Right cardiac atrium (tissue), 5 donors: ENCODE measurements at regions of chr6 and their contacts with region 1.

Region 1: GRCh38 chr6:99746261-99746895 is 139.7 kb downstream of the PRDM13 start:
- DNase-seq: peak; percentile 16 to 37 (median 34)
- ATAC-seq: peak; percentile 71 to 79
- H3K4me3 ChIP-seq: no peak overlapping the region
- H3K27ac ChIP-seq: no peak overlapping the region
- H3K4me1 ChIP-seq: no peaks in the 10 kb centered on the region
- H3K27me3 ChIP-seq: no peaks in the 10 kb centered on the region

Region 2: DNA sequence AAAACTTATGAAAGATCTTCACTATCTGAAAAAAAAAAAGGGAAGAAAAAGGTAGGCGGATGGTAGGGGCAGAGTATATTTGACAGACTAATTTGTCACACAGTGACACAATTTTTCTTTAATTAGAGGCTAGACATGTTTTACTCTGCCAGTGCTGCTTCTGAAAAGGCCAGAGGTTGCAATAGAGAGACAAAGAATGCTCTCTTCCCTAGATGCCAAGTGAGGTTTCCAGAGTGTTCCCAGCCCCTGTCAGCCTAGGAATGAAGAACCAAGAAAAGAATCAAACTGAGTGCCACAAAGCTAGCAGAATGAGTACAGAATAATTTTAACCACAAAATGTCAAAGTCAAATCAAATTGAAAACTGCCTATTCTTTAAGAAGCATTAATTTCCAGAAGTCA is 334.3 kb before region 1 on chr6:
- intact Hi-C with region 1: no loop called
- DNase-seq: no peak
- ATAC-seq: peak in 1 of 2 donors; percentile 51
- H3K4me3 ChIP-seq: no peak overlapping the region
- H3K27ac ChIP-seq: no peak overlapping the region
- H3K4me1 ChIP-seq: peaks cover 2% of the 10 kb centered on the region
- H3K27me3 ChIP-seq: no peaks in the 10 kb centered on the region

Region 3: DNA sequence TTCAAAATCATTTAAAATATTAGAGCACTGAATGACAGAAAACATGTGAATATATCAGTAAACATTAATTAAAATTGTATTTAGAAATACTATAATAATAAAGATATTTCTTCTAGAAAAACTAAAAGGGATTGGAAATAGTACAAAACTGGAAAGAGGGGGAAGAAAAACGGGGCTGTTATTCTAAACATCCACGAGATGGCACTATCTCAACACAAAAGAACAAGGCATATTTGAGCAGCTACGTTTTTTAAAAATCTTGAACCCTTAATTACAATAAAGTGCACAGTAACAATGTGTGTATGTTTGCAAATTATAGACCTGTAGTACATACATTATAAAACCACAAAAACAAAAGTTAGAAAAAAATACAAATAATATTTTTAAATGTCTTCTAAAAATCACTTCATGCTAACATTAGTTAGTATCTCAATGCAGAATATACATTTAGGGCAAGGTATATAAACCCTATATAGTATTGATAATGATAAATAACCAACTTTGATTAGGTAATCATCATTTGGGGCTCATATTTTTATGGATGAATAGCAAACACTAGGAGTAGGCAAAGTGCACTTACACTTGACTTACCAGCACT is 278.8 kb before region 1 on chr6:
- intact Hi-C with region 1: loop called (anchors 5 to 10 kb)
- DNase-seq: no peak
- ATAC-seq: no peak
- H3K4me3 ChIP-seq: no peak overlapping the region
- H3K27ac ChIP-seq: no peak overlapping the region
- H3K4me1 ChIP-seq: no peaks in the 10 kb centered on the region
- H3K27me3 ChIP-seq: no peaks in the 10 kb centered on the region

Region 4: GRCh38 chr6:99590728-99591672 is 155.4 kb before region 1 on chr6:
- intact Hi-C with region 1: loop called in 2 of 4 experiments (anchors 10 kb)
- DNase-seq: peak in 1 of 3 donors; percentile 35
- ATAC-seq: peak in 1 of 2 donors; percentile 39
- H3K4me3 ChIP-seq: peak overlapping the region; percentile 24
- H3K27ac ChIP-seq: no peak overlapping the region
- H3K4me1 ChIP-seq: peaks cover 2% of the 10 kb centered on the region
- H3K27me3 ChIP-seq: peaks cover 3% of the 10 kb centered on the region

Region 5: DNA sequence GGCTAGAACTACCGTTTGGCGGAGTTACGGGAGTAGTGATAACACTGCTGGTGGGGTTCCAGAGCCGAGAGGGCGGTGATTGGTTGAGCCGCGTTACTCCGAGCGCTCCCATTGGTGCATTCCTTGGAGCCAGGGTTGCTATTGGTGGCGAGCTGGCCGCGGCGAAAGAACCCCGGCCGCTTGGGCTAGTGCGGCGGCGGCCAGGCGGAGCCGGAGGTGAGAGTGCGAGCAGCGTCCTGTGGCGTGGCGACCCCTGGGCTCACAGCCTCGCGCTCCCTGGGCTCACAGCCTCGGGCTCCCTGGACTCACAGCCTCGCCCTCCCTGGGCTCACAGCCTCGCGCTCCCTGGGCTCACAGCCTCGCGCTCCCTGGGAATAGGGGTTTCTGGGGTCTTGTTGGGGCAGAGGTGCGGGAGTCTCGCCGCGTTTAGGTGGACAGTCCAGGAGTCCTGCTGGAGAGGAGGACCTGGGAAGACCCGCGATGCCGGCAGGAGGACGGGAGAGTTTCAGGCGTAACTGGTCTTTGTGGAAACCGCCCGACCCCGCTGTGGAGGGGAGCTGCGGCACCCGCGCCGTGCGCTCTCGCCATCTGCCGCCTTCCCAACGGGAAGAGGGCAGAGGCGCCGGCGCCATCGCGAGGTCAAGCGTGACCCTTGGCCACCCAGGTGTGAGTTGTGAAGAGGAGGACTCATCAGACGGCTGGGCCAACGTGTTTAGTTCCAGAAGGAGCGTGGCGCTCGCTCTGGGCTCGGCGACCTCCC is 127.5 kb before region 1 on chr6:
- intact Hi-C with region 1: no loop called
- DNase-seq: peak in 1 of 3 donors; percentile 37
- ATAC-seq: no peak
- H3K4me3 ChIP-seq: no peak overlapping the region
- H3K27ac ChIP-seq: no peak overlapping the region
- H3K4me1 ChIP-seq: no peaks in the 10 kb centered on the region
- H3K27me3 ChIP-seq: no peaks in the 10 kb centered on the region

Region 6: GRCh38 chr6:99810942-99811620 is 64.7 kb after region 1 on chr6:
- intact Hi-C with region 1: no loop called
- DNase-seq: no peak
- ATAC-seq: no peak
- H3K4me3 ChIP-seq: no peak overlapping the region
- H3K27ac ChIP-seq: no peak overlapping the region
- H3K4me1 ChIP-seq: no peaks in the 10 kb centered on the region
- H3K27me3 ChIP-seq: no peaks in the 10 kb centered on the region